B cell (primary cell): ENCODE measurements at regions of chr7 and their contacts with region 1.

Region 1: GRCh38 chr7:98202367-98203195 is 8.7 kb upstream of the BHLHA15 start:
- DNase-seq: peak; percentile 91
- ATAC-seq: peak; percentile 90
- H3K4me3 ChIP-seq: peak overlapping the region in 4 of 5 experiments; percentile 9 to 55 (median 40)
- H3K4me3 Mint-ChIP-seq: peak overlapping the region; percentile 88
- H3K27ac ChIP-seq: peak overlapping the region in 1 of 2 donors; percentile 41
- H3K27ac Mint-ChIP-seq: peak overlapping the region; percentile 75
- H3K4me1 ChIP-seq: peaks cover 45 to 54% of the 10 kb centered on the region in 2 donors
- H3K4me1 Mint-ChIP-seq: peaks cover 53% of the 10 kb centered on the region
- H3K27me3 ChIP-seq: peaks cover 0 to 16% (median 6%) of the 10 kb centered on the region in 4 experiments
- H3K27me3 Mint-ChIP-seq: peaks cover 16% of the 10 kb centered on the region
- CTCF ChIP-seq: no peak

Region 2: GRCh38 chr7:98133181-98133580 is 69.4 kb before region 1 on chr7:
- CTCF ChIA-PET with region 1: no interaction called
- POLR2A ChIA-PET with region 1: interaction called, 3 read pairs
- intact Hi-C with region 1: loop called (anchors 1 kb)
- DNase-seq: peak; percentile 85
- ATAC-seq: peak; percentile 80
- H3K4me3 ChIP-seq: peak overlapping the region in 1 of 5 experiments; percentile 5
- H3K4me3 Mint-ChIP-seq: peak overlapping the region; percentile 75
- H3K27ac ChIP-seq: no peak overlapping the region
- H3K27ac Mint-ChIP-seq: no peak overlapping the region
- H3K4me1 ChIP-seq: peaks cover 69 to 81% of the 10 kb centered on the region in 2 donors
- H3K4me1 Mint-ChIP-seq: peaks cover 63% of the 10 kb centered on the region
- H3K27me3 ChIP-seq: peaks cover 0 to 74% (median 52%) of the 10 kb centered on the region in 4 experiments
- H3K27me3 Mint-ChIP-seq: peaks cover 57% of the 10 kb centered on the region
- CTCF ChIP-seq: no peak

Region 3: DNA sequence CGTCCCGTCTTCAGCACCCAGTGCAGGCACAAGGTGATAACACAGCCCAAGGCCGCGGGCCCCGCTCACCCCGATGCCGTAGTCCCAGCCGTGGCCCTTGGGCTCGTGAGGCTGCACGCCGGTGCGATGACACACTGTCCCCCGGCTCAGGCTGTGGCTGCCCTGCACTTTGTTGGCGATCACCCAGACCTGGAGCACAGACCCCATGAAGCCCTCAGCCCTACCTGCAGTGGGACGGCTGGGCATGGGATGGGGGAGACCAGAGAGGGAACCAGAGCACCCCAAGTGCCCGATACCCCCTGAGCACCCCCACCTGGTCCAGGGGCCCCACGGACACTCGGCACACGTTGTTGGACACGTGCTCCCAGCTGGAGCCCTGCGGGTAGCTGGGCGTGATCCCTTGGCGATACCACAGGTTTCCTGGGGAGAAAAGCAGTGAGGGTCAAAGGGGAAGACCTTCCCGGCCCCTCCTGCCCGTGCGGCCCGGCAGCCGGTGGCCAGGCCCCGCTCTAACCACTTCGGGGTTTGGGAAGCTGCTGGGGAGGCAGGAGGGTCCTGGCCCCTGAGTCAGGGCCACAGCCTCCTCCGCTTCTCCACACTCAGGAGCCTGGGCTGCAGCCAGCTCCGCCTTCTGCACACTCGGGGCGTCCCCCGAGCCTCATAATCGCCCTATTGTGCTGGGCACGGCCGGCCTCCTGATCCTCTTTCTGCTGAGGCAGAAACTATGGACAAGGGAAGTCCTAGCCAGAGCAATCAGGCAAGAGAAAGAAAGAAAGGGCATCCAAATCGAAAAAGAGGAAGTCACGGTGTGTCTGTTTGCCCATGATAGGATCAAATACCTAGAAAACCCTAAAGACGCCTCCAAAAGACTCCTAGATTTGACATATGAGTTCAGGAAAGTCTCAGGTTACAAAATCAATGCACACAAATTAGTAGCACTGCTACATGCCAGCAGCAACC is 15.3 kb after region 1 on chr7:
- CTCF ChIA-PET with region 1: no interaction called
- POLR2A ChIA-PET with region 1: no interaction called
- intact Hi-C with region 1: loop called (anchors 1 kb)
- DNase-seq: peak; percentile 52
- ATAC-seq: peak; percentile 62
- H3K4me3 ChIP-seq: no peak overlapping the region
- H3K4me3 Mint-ChIP-seq: peak overlapping the region; percentile 20
- H3K27ac ChIP-seq: no peak overlapping the region
- H3K27ac Mint-ChIP-seq: no peak overlapping the region
- H3K4me1 ChIP-seq: peaks cover 21 to 26% of the 10 kb centered on the region in 2 donors
- H3K4me1 Mint-ChIP-seq: peaks cover 24% of the 10 kb centered on the region
- H3K27me3 ChIP-seq: peaks cover 0 to 13% (median 2%) of the 10 kb centered on the region in 4 experiments
- H3K27me3 Mint-ChIP-seq: peaks cover 5% of the 10 kb centered on the region
- CTCF ChIP-seq: no peak

Region 4: DNA sequence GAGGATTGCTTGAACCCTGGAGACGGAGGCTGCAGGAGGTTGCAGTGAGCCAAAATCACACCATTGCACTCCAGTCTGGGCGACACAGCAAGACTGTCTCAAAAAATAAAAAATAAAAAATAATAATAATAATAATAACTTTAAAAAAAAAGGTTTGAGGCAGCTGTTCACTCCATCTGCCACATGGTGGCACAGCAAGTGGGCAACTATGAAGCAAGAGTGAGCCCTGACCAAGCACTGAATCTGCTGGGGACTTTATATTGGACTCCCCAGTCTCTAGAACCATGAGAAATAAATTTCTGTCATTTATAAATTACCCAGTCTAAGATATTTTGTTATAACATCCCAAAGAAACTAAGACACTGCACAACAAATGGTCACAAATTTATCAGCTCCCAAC is 64.3 kb after region 1 on chr7:
- CTCF ChIA-PET with region 1: no interaction called
- POLR2A ChIA-PET with region 1: no interaction called
- intact Hi-C with region 1: no loop called
- DNase-seq: no peak
- ATAC-seq: peak; percentile 41
- H3K4me3 ChIP-seq: no peak overlapping the region
- H3K4me3 Mint-ChIP-seq: no peak overlapping the region
- H3K27ac ChIP-seq: no peak overlapping the region
- H3K27ac Mint-ChIP-seq: no peak overlapping the region
- H3K4me1 ChIP-seq: no peaks in the 10 kb centered on the region
- H3K4me1 Mint-ChIP-seq: no peaks in the 10 kb centered on the region
- H3K27me3 ChIP-seq: no peaks in the 10 kb centered on the region
- H3K27me3 Mint-ChIP-seq: no peaks in the 10 kb centered on the region
- CTCF ChIP-seq: peak; percentile 37

Region 5: GRCh38 chr7:98280791-98281756 is 78.5 kb after region 1 on chr7 and contains the start of gene BRI3:
- CTCF ChIA-PET with region 1: no interaction called
- POLR2A ChIA-PET with region 1: no interaction called
- intact Hi-C with region 1: loop called (anchors 1 kb)
- DNase-seq: peak; percentile 91
- ATAC-seq: peak; percentile 84
- H3K4me3 ChIP-seq: peak within 1 kb of the TSS; percentile 69 to 92 (median 77)
- H3K4me3 Mint-ChIP-seq: peak within 1 kb of the TSS; percentile 89
- H3K27ac ChIP-seq: peak within 1 kb of the TSS; percentile 83
- H3K27ac Mint-ChIP-seq: peak within 1 kb of the TSS; percentile 91
- H3K4me1 ChIP-seq: peaks cover 21 to 40% of the 10 kb centered on the region in 2 donors
- H3K4me1 Mint-ChIP-seq: peaks cover 35% of the 10 kb centered on the region
- H3K27me3 ChIP-seq: no peaks in the 10 kb centered on the region
- H3K27me3 Mint-ChIP-seq: no peaks in the 10 kb centered on the region
- CTCF ChIP-seq: no peak
- total RNA-seq, gene BRI3: 78.8 and 86.7 TPM in 2 replicates

Region 6: DNA sequence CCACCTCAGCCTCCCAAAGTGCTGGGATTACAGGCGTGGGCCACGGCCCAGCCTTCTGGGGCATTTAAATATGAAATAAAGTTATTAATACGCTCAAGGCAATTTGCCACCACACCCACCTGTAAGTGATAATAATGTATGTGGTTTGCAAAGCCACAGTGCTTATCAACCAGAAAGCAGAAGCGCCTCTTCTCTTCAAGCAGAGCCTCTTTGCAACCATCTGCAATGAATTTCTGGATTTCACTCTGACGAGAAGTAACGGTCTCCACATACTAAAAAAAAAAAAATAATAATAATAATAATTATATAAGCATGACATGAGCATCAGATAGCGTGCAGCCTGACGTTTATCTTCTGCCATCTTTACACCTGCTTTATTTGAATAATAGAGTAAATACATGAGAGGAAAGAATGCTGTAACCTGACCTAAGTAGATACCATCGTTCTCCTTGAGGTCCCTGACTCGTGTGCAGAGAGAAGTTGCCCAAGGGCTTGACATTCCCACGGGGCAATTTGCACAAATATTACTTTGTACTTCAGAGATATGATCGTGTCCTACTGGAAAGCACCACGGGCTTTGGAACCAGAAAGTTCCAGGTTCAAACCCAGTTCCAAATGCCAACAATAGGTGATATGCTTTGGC is 112.9 kb after region 1 on chr7:
- CTCF ChIA-PET with region 1: no interaction called
- POLR2A ChIA-PET with region 1: no interaction called
- intact Hi-C with region 1: loop called (anchors 1 kb)
- DNase-seq: peak; percentile 79
- ATAC-seq: peak; percentile 57
- H3K4me3 ChIP-seq: peak overlapping the region in 1 of 5 experiments; percentile 23
- H3K4me3 Mint-ChIP-seq: peak overlapping the region; percentile 56
- H3K27ac ChIP-seq: peak overlapping the region; percentile 72 to 87
- H3K27ac Mint-ChIP-seq: no peak overlapping the region
- H3K4me1 ChIP-seq: peaks cover 26 to 41% of the 10 kb centered on the region in 2 donors
- H3K4me1 Mint-ChIP-seq: peaks cover 41% of the 10 kb centered on the region
- H3K27me3 ChIP-seq: peaks cover 0 to 28% (median 16%) of the 10 kb centered on the region in 4 experiments
- H3K27me3 Mint-ChIP-seq: peaks cover 24% of the 10 kb centered on the region
- CTCF ChIP-seq: no peak

Region 7: GRCh38 chr7:99531354-99531765 is 1328.8 kb after region 1 on chr7:
- CTCF ChIA-PET with region 1: no interaction called
- POLR2A ChIA-PET with region 1: interaction called, 10 read pairs
- intact Hi-C with region 1: no loop called
- DNase-seq: no peak
- ATAC-seq: no peak
- H3K4me3 ChIP-seq: peak overlapping the region in 1 of 5 experiments; percentile 3
- H3K4me3 Mint-ChIP-seq: no peak overlapping the region
- H3K27ac ChIP-seq: no peak overlapping the region
- H3K27ac Mint-ChIP-seq: no peak overlapping the region
- H3K4me1 ChIP-seq: no peaks in the 10 kb centered on the region
- H3K4me1 Mint-ChIP-seq: no peaks in the 10 kb centered on the region
- H3K27me3 ChIP-seq: no peaks in the 10 kb centered on the region
- H3K27me3 Mint-ChIP-seq: no peaks in the 10 kb centered on the region
- CTCF ChIP-seq: no peak